ENCODE measurements at regions of chr19 and their contacts with region 1.

Region 1: DNA sequence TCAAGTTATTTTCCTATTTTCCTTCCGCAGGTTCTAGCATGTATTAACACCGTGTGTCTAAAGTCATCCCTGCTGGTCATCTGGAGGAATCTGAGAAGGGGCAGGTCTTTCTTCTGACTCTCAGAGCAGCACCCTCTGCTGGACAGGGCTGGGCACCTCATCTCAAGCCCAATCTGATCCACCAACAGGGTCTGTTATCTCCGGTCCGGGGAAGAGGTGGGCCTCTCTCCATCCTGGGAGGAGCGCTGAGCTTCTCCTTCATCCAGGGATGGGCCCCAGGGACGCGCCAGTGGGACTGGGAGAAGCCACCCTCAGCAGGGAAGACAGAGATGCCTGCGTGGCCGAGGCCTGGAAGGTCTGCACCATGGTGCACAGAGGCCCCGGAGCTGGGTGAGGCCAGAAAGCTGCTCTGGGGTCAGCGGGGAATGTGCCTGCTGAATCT is 26.0 kb upstream of the ZNF331 start:
- DNase-seq: peak; percentile 74
- H3K4me3 Mint-ChIP-seq: no peak overlapping the region
- H3K27ac Mint-ChIP-seq: no peak overlapping the region
- H3K4me1 Mint-ChIP-seq: no peaks in the 10 kb centered on the region
- H3K27me3 Mint-ChIP-seq: no peaks in the 10 kb centered on the region

Region 2: DNA sequence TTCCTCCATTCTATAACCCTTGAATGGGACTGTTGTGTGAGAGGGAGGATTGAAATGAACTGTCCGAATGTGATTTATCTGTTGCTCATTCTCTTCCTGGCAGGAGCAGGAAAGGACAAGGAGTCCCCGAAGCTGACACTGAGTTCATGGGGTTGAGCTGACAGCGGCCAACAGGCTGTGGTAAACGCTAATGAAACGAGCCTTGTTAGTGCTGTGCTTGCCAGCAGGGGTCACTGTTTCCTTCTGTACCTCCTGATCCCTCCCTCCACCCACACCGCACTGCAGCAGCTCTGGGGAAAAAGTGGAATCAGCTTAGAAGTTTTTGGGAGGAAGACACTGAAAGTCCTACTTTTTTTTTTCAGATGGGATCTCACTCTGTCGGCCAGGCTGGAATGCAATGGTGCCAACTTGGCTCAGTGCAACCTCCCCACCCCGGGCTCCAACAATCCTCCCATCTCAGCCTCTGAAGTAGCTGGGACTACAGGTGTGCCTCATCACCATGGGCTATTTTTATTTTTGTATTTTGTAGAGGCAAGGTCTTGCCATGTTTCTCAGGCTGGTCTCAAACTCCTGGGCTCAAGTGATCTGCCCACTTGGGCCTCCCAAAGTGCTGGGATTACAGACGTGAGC is 86.9 kb before region 1 on chr19:
- intact Hi-C with region 1: loop called (anchors 5 kb)
- DNase-seq: peak; percentile 88
- H3K4me3 Mint-ChIP-seq: no peak overlapping the region
- H3K27ac Mint-ChIP-seq: no peak overlapping the region
- H3K4me1 Mint-ChIP-seq: peaks cover 3% of the 10 kb centered on the region
- H3K27me3 Mint-ChIP-seq: no peaks in the 10 kb centered on the region

Region 3: DNA sequence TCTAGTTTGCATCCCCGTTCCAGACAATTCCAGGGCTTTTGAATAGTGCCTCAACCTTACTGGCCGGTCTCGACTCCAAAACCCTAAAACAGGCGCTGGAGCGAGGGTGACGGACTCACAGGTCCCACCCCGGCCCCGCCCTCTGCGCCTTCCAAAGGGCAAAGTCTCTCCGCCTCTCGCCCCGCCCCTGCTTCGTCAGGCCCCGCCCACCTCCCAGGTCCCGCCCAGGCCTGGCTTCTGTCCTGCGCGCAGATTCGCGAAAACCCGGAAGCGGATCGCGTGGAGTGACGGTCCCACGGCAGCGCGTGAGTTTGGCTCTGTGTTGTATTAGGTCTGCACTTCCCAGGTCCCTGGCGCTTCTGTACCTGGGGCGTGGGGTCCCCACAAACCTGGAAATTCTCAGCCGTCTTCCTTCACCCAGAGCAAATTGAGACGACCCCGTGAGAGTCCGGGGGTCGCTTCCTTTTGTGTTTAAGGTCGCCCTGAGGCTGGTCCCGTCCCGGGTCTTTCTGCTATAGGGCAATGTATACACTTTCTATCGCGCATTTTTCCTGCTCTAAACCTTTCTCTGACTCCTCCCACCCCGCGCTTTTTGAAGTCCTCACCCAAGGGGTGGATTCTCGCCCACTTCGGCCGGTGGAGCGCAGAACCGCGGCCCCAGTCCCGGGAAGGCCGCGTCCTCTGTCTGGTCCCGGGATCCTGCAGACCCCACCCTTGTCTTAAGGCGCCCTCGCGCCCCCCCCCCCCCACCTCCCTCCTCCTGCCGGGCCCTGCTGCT is 44.3 kb before region 1 on chr19 and contains the start of gene ZNF813:
- intact Hi-C with region 1: no loop called
- DNase-seq: peak; percentile 98
- H3K4me3 Mint-ChIP-seq: peak within 1 kb of the TSS; percentile 92
- H3K27ac Mint-ChIP-seq: peak within 1 kb of the TSS; percentile 87
- H3K4me1 Mint-ChIP-seq: peaks cover 16% of the 10 kb centered on the region
- H3K27me3 Mint-ChIP-seq: peaks cover 2% of the 10 kb centered on the region
- total RNA-seq, gene ZNF813: 4.3 and 5.2 TPM in 2 replicates

Region 4: DNA sequence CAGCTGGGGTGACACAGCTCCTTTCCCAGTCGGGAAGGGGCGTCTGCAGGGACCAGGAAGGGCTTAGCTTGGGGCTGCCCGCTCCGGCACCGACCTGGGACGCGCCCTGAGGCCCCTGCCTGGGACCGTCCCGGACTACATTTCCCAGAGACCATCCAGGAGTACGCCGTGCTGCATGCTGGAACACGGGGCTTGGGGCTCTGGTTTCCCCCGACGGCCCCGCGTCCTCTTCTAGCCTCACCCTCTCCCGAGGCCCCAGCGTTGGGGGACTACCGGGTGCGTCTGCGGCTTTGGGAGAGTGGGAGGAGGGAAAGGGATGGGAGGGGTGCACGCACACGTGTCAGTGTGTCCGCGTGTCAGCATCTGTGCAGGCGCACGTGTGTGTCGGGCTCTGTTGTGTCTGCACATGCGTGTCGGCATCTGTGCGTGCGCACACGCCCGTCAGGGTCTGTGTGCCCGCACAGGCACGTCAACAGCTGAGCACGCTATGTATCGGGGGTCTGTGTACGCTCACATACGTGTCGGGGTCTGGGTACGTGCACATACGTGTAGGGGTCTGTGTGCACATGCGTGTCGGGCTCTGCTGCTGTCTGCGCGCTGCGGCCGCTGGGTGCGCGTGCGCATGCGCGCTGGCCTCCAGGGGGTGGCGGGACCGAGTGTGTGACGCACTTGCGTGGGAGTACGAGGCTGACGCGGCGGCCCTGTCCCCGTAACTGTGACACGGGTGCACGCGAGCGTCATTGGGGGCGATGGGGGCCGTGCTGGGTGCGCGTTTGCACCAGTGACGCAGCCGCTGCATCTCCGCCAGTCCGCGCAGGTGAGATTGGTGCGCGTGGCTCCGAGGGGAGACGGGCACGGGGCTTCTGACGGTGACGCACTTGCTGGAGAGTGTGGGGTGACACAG is 25.8 kb after region 1 on chr19 and contains the start of gene ZNF331:
- intact Hi-C with region 1: no loop called
- DNase-seq: peak; percentile 96
- H3K4me3 Mint-ChIP-seq: peak within 1 kb of the TSS; percentile 97
- H3K27ac Mint-ChIP-seq: peak within 1 kb of the TSS; percentile 99
- H3K4me1 Mint-ChIP-seq: peaks cover 13% of the 10 kb centered on the region
- H3K27me3 Mint-ChIP-seq: peaks cover 2% of the 10 kb centered on the region
- total RNA-seq, gene ZNF331: 18.2 and 18.9 TPM in 2 replicates

Measured in activated CD4-positive, alpha-beta T cell treated with anti-CD3 and anti-CD28 coated beads, Interleukin-2, amount 10 ng/mL, durations not matched to agents 24 days and 14 days (primary cell).